ENCODE measurements at regions of chr12 and their contacts with region 1.

Region 1: DNA sequence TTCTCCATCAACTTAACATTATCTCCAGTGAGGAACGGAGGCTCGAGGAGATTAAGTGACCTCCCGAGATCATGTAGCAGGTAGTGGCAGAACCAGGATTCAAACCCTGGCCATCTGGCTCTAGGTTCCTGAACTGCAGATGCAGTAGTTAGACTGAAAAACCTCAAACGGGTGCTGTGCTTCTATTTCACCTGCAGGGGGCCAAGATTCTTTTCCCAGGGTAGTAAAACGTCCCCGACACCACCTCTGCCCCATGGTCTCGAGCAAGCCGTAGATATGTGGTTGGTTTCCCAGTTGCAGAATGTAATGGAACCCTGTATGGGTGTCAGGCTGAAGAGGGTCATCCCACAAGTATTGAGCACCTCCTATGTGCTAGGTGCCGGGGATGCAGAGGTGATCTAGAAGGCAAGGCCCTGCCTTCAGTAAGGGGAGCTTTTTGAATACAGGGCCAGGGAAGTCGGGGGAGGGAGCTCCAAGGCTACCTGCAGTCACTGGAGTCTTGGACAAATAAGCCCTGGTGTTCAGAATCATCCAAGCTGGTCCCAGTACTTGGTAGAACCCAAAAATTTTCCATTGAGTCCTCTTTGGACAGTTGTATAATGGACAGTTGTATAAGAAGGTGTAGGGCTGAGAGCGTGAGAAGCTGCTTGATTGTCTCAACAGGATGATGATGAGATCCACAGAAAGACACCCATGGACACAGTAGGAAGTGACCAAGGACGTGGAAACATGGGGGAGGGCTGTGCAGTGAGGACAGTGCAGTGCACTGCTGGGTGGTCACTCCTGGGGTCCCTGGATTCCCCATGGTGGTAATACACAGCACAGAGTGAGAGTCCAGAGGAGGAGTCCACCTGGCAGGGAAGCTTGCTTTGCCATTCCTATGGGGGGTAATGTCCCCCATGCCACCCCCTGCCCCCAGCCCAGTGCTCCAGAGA is 197.2 kb downstream of the CHST11 start:
- DNase-seq: no peak
- H3K4me3 ChIP-seq: no peak overlapping the region
- H3K27ac ChIP-seq: no peak overlapping the region
- H3K4me1 ChIP-seq: peaks cover 0 to 3% (median 0%) of the 10 kb centered on the region in 4 donors
- H3K27me3 ChIP-seq: no peaks in the 10 kb centered on the region
- CTCF ChIP-seq: peak in 4 of 5 experiments; percentile 17 to 36 (median 28)
- EP300 ChIP-seq: no peak
- POLR2A ChIP-seq: no peak

Region 2: DNA sequence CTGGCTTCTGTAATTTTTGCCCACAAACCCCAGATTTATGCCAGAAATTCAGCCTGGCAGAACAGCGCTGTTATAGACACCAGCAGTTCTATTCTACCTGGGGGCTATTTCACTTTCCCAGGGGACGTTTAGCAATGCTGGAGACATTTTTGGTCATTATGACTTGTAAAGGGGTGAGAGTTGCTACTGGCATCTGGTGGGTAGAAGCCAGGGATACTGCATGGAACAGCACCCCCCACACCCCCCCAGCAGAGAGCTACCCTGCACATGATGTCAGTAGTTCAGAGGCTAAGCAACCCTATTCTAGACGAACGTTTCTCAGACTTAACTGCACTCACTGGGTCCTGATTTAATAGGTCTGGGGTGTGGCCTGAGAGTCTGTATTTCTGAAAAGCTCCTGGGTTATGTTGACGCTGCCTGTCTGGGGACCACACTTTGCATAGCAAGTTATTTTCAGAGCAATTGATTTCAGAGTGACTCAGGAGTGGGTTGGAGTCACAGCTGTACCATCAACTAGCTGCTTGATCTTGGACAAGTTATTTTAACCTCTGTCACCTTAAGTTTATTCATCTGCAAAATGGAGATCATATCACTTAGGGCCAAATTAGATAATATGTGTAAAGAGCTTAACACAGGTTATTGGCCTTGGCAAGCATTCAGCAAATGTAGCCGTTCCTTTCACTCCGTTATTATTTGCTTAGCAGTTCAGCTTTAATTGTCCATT is 148.7 kb before region 1 on chr12:
- in situ Hi-C with region 1: no loop called
- intact Hi-C with region 1: no loop called
- DNase-seq: peak; percentile 36
- H3K4me3 ChIP-seq: no peak overlapping the region
- H3K27ac ChIP-seq: peak overlapping the region in 1 of 4 donors; percentile 42
- H3K4me1 ChIP-seq: peaks cover 0 to 5% (median under 1%) of the 10 kb centered on the region in 4 donors
- H3K27me3 ChIP-seq: no peaks in the 10 kb centered on the region
- CTCF ChIP-seq: no peak
- EP300 ChIP-seq: no peak
- POLR2A ChIP-seq: no peak

Region 3: GRCh38 chr12:104577581-104577981 is 76.4 kb before region 1 on chr12:
- in situ Hi-C with region 1: no loop called
- intact Hi-C with region 1: loop called (anchors 2 kb)
- DNase-seq: no peak
- H3K4me3 ChIP-seq: no peak overlapping the region
- H3K27ac ChIP-seq: no peak overlapping the region
- H3K4me1 ChIP-seq: peaks cover 0 to 27% (median 2%) of the 10 kb centered on the region in 4 donors
- H3K27me3 ChIP-seq: no peaks in the 10 kb centered on the region
- CTCF ChIP-seq: no peak
- EP300 ChIP-seq: no peak
- POLR2A ChIP-seq: no peak

Measured in transverse colon (tissue), 4 donors.